CD8-positive, alpha-beta T cell (primary cell): ENCODE measurements at regions of chr12 and their contacts with region 1.

Region 1: GRCh38 chr12:25041006-25041741 is 92.3 kb upstream of the BCAT1 start:
- DNase-seq: no peak
- ATAC-seq: no peak
- H3K4me3 ChIP-seq: no peak overlapping the region
- H3K4me3 Mint-ChIP-seq: no peak overlapping the region
- H3K27ac ChIP-seq: no peak overlapping the region
- H3K27ac Mint-ChIP-seq: no peak overlapping the region
- H3K4me1 ChIP-seq: no peaks in the 10 kb centered on the region
- H3K4me1 Mint-ChIP-seq: peaks cover 2% of the 10 kb centered on the region
- H3K27me3 ChIP-seq: peaks cover 0 to 4% of the 10 kb centered on the region in 2 experiments
- H3K27me3 Mint-ChIP-seq: peaks cover 3% of the 10 kb centered on the region
- CTCF ChIP-seq: no peak

Region 2: GRCh38 chr12:24997970-24998582 is 43.1 kb before region 1 on chr12:
- CTCF ChIA-PET with region 1: interaction called, 3 read pairs
- POLR2A ChIA-PET with region 1: no interaction called
- intact Hi-C with region 1: loop called in 1 of 2 experiments (anchors 5 kb)
- DNase-seq: peak in 2 of 9 experiments; percentile 11 to 37
- ATAC-seq: peak; percentile 34
- H3K4me3 ChIP-seq: no peak overlapping the region
- H3K4me3 Mint-ChIP-seq: no peak overlapping the region
- H3K27ac ChIP-seq: no peak overlapping the region
- H3K27ac Mint-ChIP-seq: peak overlapping the region; percentile 6
- H3K4me1 ChIP-seq: no peaks in the 10 kb centered on the region
- H3K4me1 Mint-ChIP-seq: peaks cover 10% of the 10 kb centered on the region
- H3K27me3 ChIP-seq: no peaks in the 10 kb centered on the region
- H3K27me3 Mint-ChIP-seq: no peaks in the 10 kb centered on the region
- CTCF ChIP-seq: no peak

Region 3: GRCh38 chr12:25058658-25059058 is 17.5 kb after region 1 on chr12:
- CTCF ChIA-PET with region 1: no interaction called
- POLR2A ChIA-PET with region 1: interaction called, 4 read pairs
- intact Hi-C with region 1: loop called in 1 of 2 experiments (anchors 2 kb)
- DNase-seq: no peak
- ATAC-seq: no peak
- H3K4me3 ChIP-seq: no peak overlapping the region
- H3K4me3 Mint-ChIP-seq: no peak overlapping the region
- H3K27ac ChIP-seq: no peak overlapping the region
- H3K27ac Mint-ChIP-seq: no peak overlapping the region
- H3K4me1 ChIP-seq: peaks cover 44% of the 10 kb centered on the region
- H3K4me1 Mint-ChIP-seq: peaks cover 72% of the 10 kb centered on the region
- H3K27me3 ChIP-seq: no peaks in the 10 kb centered on the region
- H3K27me3 Mint-ChIP-seq: no peaks in the 10 kb centered on the region
- CTCF ChIP-seq: no peak